ENCODE measurements at regions of chr11 and their contacts with region 1.

Region 1: DNA sequence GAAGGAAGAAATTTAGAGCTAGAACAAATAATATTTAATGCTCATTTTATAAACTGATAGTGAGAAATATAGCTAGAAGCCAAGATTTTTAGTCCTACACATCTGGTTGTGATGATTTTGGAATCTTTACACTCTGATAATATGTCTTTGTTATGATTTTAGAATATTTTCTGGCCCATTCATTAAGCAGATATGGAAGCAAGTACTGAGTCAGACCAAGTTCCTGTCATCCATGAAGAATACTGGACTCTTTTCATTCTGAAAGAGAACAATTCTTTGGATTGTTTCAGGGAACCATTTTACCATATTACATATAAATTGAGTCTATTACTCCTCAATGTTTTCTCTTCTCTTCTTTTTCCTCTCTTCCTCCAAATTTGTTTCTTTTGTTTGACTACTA is 227.4 kb downstream of the TMEM135 start:
- DNase-seq: no peak
- ATAC-seq: no peak
- H3K4me3 ChIP-seq: no peak overlapping the region
- H3K27ac ChIP-seq: no peak overlapping the region
- H3K4me1 ChIP-seq: peaks cover 0 to 5% of the 10 kb centered on the region in 2 experiments; a peak in 2 of 5 replicates
- H3K27me3 ChIP-seq: no peaks in the 10 kb centered on the region
- CTCF ChIP-seq: no peak
- EP300 ChIP-seq: no peak
- POLR2A ChIP-seq: no peak
- RAD21 ChIP-seq: no peak

Region 2: GRCh38 chr11:87193756-87194470 is 71.2 kb before region 1 on chr11:
- CTCF ChIA-PET with region 1: no interaction called
- POLR2A ChIA-PET with region 1: no interaction called
- in situ Hi-C with region 1: no loop called
- intact Hi-C with region 1: loop called (anchors 5 kb)
- DNase-seq: no peak
- ATAC-seq: no peak
- H3K4me3 ChIP-seq: no peak overlapping the region
- H3K27ac ChIP-seq: 0 out of 3 replicates have a peak overlapping the region, but pooled peaks have one; percentile 19
- H3K4me1 ChIP-seq: peaks cover 7 to 16% of the 10 kb centered on the region in 2 experiments; a peak in 3 of 5 replicates
- H3K27me3 ChIP-seq: no peaks in the 10 kb centered on the region
- CTCF ChIP-seq: no peak
- EP300 ChIP-seq: no peak
- POLR2A ChIP-seq: no peak
- RAD21 ChIP-seq: no peak

Measured in K562 (cell line).